WTC11 (cell line): ENCODE measurements at regions of chr16 and their contacts with region 1.

Region 1: DNA sequence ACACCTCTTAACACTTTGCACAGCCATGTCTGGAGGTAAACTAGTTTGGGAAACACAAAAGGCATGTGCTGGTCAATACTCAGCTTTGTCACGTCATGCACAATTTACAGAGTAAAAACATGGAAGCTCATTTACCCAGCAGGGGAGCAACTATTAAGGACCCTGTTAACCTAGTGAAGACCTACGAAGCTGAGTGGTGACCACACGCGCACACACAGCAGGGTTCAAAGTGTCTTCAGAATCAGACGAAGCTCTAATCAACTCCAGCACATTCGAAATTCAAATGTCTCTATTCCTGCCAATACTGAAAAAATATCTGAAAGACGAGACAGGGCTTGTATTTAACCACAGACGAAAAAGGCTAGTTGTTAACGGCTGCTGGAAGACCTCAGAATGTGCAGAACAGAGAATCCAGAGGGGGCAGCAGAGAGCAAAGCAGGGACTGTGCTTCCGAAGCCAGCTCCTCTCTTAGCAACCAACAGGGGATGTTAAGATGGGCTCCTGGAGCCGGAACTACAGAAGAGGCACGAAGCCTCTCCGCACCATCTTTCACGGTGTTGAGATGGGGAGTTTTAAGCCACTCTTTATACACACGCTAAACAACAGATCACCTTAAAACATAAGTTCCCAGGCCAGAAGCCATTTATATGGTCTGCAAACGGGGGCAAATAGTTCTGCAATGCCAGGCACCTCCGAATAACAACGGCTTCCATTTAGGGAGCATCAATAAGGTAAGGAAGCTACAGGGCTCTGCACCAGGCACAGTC is 45.7 kb downstream of the CMTM4 start:
- DNase-seq: peak; percentile 88
- ATAC-seq: peak; percentile 97
- H3K4me3 Mint-ChIP-seq: peak overlapping the region; percentile 55
- H3K27ac Mint-ChIP-seq: 0 out of 2 replicates have a peak overlapping the region, but pooled peaks have one; percentile 37
- H3K4me1 Mint-ChIP-seq: peaks cover 18% of the 10 kb centered on the region
- H3K27me3 Mint-ChIP-seq: no peaks in the 10 kb centered on the region
- CTCF ChIP-seq: peak; percentile 80

Region 2: DNA sequence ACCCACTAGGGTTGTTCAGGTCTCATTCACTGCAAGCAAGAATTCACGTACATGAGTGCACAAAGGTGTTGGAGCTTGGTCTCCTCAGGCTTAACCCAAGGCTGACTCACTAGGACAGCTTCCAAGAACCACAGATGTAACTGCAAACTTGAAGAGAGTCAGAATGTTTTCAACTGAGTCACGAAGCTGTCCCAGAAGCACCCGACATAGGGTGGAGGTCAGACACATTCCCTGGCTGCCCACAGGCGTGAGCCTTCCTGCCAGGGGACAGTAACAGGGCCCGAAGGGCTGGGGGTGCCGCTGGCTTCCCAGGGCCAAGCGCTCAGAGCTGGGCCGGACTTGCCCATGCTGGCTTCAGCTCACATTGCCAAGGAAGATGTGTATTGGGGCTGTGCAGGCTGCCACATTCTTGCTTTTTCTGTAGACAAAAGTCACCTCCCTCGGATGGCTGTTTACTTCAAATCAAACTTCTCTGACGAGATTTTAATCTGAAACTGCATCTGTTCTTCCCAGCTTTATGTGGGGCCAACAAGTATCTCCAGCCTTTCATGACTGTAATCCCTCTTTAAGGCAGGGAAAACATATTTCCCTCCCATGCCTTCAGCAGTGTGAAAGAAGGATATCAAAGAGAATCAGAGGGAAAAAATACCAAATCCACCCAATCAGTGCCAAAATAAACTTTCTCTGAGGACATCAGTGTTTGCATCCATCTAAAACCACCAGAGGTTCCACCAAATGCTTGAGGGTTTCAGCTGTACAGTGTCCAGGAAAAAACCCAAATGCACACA is 32.1 kb before region 1 on chr16:
- CTCF ChIA-PET with region 1: interaction called, 18 read pairs
- POLR2A ChIA-PET with region 1: no interaction called
- DNase-seq: no peak
- ATAC-seq: no peak
- H3K4me3 Mint-ChIP-seq: no peak overlapping the region
- H3K27ac Mint-ChIP-seq: peak overlapping the region; percentile 19; the same call in 1 of the 2 replicates
- H3K4me1 Mint-ChIP-seq: peaks cover 28% of the 10 kb centered on the region
- H3K27me3 Mint-ChIP-seq: no peaks in the 10 kb centered on the region
- CTCF ChIP-seq: no peak

Region 3: GRCh38 chr16:66668777-66669444 is 18.0 kb after region 1 on chr16:
- CTCF ChIA-PET with region 1: interaction called, 80 read pairs
- POLR2A ChIA-PET with region 1: interaction called, 3 read pairs
- DNase-seq: no peak
- ATAC-seq: no peak
- H3K4me3 Mint-ChIP-seq: no peak overlapping the region
- H3K27ac Mint-ChIP-seq: no peak overlapping the region
- H3K4me1 Mint-ChIP-seq: no peaks in the 10 kb centered on the region
- H3K27me3 Mint-ChIP-seq: no peaks in the 10 kb centered on the region; the same call in 1 of the 2 replicates
- CTCF ChIP-seq: no peak

Region 4: GRCh38 chr16:66696669-66697630 is 46.1 kb after region 1 on chr16 and contains the start of gene CMTM4:
- CTCF ChIA-PET with region 1: interaction called, 24 read pairs
- POLR2A ChIA-PET with region 1: no interaction called
- DNase-seq: peak; percentile 87
- ATAC-seq: peak; percentile 90
- H3K4me3 Mint-ChIP-seq: peak within 1 kb of the TSS; percentile 78
- H3K27ac Mint-ChIP-seq: peak within 1 kb of the TSS; percentile 65; the same call in 1 of the 2 replicates
- H3K4me1 Mint-ChIP-seq: peaks cover 42% of the 10 kb centered on the region
- H3K27me3 Mint-ChIP-seq: peaks cover 9% of the 10 kb centered on the region
- CTCF ChIP-seq: no peak
- total RNA-seq, gene CMTM4: 56.2 to 60.6 TPM (median 58.5 TPM) in 3 replicates

Region 5: GRCh38 chr16:66740010-66740409 is 89.1 kb after region 1 on chr16:
- CTCF ChIA-PET with region 1: interaction called, 17 read pairs
- POLR2A ChIA-PET with region 1: no interaction called
- DNase-seq: peak; percentile 40
- ATAC-seq: peak; percentile 85
- H3K4me3 Mint-ChIP-seq: no peak overlapping the region
- H3K27ac Mint-ChIP-seq: peak overlapping the region; percentile 90
- H3K4me1 Mint-ChIP-seq: peaks cover 18% of the 10 kb centered on the region
- H3K27me3 Mint-ChIP-seq: no peaks in the 10 kb centered on the region
- CTCF ChIP-seq: peak; percentile 61

Region 6: DNA sequence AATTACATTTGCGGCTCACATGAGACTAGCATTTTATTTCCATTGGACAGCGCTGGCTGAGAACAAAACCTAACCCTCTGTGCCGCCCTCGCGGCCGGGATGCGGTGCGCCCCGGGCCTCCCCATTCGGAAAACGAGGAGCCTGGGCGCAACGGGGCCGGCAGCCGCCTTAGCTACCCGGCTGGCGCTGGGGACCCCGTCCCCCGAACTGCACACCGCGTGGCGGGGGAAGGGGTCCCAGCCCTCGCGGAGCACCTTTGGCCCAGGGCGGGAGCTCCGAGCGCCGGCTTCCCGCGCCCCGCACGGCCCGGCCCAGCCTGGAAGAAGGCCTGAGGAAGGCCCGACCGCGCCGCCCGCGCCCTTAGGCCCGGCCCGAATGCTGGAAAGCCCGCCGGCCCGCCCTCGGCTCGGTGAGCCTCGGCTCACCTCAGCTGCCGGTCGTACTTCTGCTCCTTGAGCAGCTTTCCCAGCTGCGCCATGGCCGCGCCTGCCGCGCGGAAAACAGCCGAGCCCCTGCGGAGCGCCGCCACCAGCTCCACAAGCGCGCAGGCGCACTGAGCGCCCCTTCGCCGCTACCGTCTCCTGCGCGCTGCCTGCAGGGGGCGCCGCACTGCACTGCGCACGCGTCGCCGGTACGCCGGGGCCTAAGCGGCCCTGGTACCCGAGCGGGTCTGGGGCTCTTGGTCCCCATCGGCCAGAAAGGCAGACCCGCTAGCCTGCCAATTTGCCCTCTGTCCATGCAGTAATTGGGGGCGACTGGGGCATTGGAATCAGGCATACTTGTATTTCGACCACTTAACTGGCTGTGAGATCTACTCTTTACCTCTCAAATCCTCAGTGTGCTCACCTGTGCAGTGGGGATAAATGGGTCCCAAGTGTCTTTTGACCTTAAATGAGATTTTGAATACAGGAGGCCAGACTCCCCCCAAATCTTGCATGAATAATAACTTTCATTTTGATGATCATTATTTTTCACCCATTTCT is 179.8 kb after region 1 on chr16 and contains the start of gene NAE1:
- CTCF ChIA-PET with region 1: interaction called, 10 read pairs
- POLR2A ChIA-PET with region 1: no interaction called
- DNase-seq: peak; percentile 90
- ATAC-seq: peak; percentile 96
- H3K4me3 Mint-ChIP-seq: peak within 1 kb of the TSS; percentile 67
- H3K27ac Mint-ChIP-seq: no peak within 1 kb of the TSS
- H3K4me1 Mint-ChIP-seq: peaks cover 20% of the 10 kb centered on the region
- H3K27me3 Mint-ChIP-seq: peaks cover 14% of the 10 kb centered on the region
- CTCF ChIP-seq: peak; percentile 87
- total RNA-seq, gene NAE1: 103 to 129 TPM (median 107 TPM) in 3 replicates